Psoas muscle (tissue), 8 donors: ENCODE measurements at regions of chr16 and their contacts with region 1.

Region 1: DNA sequence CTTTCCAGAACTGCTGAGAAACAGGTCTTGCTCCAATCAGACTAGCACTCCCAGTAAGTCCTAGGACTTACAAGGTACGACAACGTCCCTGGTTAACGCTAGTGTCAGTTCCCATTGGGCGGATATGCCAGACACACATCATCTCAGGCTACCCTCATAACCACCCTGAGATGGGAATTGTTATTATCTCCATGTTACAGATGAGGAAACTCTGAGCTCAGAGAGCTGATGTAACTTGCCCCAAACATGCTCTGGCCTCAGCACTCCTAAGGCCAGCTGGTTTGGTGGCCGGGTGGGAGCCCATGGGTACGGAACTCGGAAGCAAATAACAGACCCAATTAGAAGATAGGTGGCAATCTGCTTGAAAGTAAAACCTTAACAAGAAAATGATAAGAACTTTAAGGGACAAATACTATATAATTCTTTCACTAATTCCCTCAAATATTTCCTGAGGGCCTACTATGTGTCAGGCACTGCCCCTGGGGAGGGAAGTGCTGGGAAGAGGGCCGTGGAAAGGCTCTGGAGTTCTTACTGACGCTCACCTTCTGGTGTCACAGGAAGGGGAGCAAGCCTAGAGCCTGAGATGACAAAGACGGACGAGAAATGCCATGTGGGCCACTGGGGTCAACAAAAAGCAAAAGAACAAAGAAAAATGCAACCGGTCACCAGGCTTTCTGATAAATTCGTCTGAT is 6.9 kb downstream of the CREBBP start:
- DNase-seq: no peak
- ATAC-seq: peak; percentile 16 to 44 (median 34)
- H3K4me3 ChIP-seq: peak overlapping the region; percentile 21
- H3K27ac ChIP-seq: peak overlapping the region; percentile 73
- H3K4me1 ChIP-seq: peaks cover 95% of the 10 kb centered on the region
- H3K27me3 ChIP-seq: no peaks in the 10 kb centered on the region
- CTCF ChIP-seq: no peak

Region 2: DNA sequence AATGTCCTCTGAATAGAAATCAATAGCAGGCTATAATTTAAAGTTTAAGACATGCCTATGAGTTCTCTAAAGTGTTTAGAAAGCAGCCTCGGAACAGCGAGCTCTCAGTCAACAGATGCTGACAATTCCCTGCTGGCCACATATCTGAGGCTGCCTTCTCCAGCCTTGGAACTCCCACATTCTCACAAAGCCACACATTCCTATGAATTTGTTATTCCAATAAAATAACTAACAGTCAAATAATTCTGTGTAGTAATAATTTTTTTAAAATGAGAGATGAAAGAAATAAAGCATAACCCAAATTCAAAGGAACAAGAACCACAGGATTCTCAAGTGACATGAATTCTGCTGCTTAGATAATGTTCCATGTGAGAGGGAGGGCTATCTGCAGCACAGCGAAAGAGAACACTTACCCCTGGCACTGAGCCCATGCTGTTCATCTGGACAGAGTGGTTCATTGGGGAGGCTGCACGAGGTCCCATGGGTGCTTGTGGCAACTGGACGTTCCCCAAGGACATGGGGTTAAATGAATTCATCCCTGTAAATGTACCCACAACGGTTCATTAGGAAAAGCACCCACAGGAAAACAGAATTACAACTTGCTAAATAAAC is 99.4 kb before region 1 on chr16:
- intact Hi-C with region 1: loop called in 1 of 2 experiments (anchors 5 kb)
- DNase-seq: no peak
- ATAC-seq: peak; percentile 44 to 67 (median 58)
- H3K4me3 ChIP-seq: no peak overlapping the region
- H3K27ac ChIP-seq: peak overlapping the region; percentile 46
- H3K4me1 ChIP-seq: peaks cover 25% of the 10 kb centered on the region
- H3K27me3 ChIP-seq: no peaks in the 10 kb centered on the region
- CTCF ChIP-seq: no peak

Region 3: DNA sequence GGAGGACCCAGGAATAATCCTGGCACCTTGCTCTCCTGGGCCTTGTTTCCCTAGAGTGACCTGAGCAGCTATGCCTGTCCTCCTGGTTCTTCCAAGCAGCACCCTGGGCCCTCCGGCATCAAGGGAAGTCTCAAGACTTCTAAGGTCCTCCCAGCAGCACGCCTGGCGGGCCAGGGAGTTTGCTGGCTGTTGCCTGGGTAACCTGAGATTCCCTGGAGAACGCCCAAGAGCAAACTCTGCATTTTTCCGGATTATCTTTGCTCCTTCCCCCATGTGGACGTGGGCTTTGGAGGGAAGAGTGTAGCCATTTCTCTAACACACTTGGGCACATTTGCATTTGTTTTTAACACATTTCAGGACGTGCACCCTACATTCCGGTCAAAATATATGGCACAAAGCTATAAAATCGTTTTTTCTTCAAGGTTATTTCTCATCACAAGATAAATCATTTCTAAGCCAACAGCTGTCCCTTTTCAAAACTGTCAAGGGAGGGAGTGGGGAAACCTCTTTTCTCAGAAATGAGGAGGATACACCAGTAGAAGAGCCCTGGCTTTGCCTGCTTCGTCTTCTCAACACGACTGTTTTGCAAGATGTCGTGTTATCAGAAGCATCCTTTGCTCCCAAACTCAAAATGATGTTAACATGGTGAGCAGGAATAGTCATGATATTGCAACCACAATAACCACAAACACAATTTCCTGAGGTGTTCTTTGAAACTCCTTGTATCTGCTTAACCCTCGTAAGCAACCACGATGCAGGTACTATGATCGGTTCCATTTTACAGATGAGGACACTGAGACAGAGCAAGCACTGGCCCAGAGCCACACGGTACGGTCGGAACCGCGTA is 126.1 kb after region 1 on chr16:
- intact Hi-C with region 1: no loop called
- DNase-seq: peak; percentile 53 to 77
- ATAC-seq: peak; percentile 35 to 76 (median 59)
- H3K4me3 ChIP-seq: peak overlapping the region; percentile 23
- H3K27ac ChIP-seq: peak overlapping the region; percentile 61
- H3K4me1 ChIP-seq: peaks cover 20% of the 10 kb centered on the region
- H3K27me3 ChIP-seq: no peaks in the 10 kb centered on the region
- CTCF ChIP-seq: no peak